Right ventricle myocardium inferior (tissue), 1 donor: ENCODE measurements at regions of chr12 and their contacts with region 1.

Region 1: DNA sequence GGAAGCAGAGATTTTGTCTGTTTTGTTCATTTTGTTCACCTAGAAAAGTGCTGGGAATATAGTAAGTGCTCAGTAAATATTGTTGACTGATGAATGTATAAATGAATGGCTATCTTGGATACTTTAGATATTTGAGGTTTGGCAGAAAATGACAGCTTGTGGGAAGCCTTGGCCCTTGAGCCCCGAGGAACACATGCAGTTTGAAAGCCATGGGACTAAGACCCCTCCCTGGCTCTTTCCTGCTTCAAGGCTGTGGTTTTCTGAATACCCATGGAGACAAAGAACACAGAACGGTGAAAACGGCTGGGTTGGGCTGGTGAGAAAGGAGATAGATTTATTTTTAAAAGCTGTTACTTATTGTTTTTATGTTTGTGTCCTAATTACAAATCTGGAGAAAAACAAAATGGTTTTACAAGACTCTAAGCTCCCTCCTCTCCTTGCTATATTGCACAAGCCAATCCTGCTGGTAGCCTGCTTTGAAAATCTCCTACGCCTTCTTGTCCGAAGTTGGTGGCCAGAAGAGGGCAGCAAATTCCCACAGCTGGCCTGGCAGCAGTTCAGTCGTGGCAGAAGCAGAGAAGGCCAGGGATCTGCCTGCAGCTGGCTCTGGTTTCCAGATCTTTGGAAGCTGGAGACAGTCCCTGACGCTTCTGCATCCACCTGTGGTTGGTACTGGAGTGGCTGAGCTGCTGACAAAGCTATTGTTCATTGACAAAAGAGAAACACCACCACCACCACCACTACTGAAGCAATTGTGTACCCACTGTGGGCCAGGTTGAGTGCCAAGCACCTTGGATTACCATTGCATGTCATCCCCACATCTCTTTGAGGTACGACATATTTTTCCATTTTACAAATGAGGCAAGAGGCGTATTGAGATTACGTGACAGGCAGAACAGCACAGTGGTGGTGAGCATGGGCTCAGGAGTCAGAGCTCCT is 5.2 kb upstream of the KRT85 start:
- DNase-seq: no peak
- ATAC-seq: peak; percentile 79

Region 2: DNA sequence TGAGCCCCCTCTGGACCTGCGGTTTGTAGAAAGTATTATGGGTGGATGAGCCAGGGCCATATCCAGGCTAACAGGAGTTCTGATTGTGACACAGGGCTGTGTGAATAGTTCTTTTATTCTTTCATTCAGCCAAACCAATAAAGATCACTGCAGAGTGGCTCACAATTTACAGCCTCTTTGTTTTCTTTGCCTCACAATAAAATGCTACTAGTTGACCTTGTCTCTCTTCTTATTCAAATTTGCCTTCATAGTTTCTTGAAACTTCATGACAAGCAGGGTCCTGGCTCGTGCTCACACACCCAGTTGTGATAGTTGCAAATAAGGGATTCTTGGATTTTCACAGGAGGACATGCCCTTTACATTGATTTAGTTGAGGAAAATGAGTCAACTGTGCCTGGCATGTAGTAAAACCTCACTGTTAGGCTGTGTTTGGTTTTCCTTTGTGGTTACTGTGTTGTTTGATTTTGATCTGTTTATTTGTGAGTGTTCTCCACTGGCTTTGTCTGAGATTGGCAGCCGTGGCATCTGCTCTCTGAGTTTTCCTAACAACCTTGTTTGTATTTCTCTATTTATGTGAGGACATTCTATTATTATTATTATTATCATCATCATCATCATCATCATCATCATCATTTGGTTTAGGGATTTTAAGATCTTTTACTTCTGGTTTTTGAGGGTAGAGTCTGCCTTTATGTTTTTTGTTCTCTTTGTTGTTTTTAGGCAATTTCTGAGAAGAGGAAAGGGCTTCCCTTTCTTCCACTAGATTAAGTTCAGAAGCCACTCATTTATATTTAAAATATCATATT is 82.1 kb after region 1 on chr12:
- intact Hi-C with region 1: no loop called
- DNase-seq: no peak
- ATAC-seq: no peak

Region 3: GRCh38 chr12:52506858-52507715 is 134.6 kb after region 1 on chr12:
- intact Hi-C with region 1: loop called (anchors 1 kb)
- DNase-seq: no peak
- ATAC-seq: no peak

Region 4: DNA sequence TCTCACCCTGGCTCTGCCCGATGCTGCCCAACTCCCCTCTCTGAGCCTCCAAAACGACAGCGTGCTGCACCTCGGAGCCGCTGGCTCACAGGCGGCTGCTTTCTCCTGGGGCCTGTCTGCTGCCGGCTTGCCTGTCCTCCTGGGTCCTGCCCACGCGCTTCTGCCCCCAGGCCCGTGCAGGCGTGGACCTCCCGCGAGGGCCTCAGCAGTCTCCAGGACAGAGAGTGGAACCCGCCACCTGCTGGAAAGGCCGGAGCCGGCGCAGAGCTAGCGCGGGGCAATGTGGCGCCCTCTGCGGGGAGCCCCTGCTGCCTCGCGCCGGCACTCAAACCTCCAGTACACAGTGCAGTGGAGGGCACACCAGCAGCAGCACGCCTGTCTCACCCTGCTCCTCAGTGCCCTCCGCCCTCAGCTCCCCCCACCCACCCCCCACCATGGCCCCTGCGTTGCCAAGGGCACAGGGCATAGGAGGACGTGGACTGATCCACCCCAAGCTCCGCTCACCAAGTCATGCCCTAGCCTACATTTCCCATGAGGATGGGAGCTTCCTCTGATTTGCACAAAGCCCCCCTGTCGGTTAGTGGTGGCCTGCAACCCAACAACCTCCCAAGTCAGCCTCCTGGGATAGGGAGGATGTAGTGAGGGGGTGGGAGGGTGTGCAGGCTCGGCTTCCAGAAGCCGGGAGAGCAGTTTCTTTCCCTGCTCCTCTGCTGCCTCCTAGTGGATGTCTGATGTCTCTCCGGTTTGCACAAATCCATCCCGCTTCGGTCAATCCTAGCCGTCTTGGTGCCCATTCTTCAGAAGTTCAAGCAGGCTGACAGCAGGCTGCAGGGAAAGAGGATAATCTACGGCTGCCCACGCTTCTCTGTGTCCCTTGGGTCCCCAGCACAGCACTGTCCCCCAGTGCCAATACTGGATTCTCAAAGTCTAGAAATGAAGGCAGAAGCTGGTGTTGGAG is 507.2 kb after region 1 on chr12:
- intact Hi-C with region 1: loop called (anchors 1 kb)
- DNase-seq: peak; percentile 80
- ATAC-seq: peak; percentile 89